Mammary epithelial cell (primary cell): ENCODE measurements at regions of chr17 and their contacts with region 1.

Region 1: DNA sequence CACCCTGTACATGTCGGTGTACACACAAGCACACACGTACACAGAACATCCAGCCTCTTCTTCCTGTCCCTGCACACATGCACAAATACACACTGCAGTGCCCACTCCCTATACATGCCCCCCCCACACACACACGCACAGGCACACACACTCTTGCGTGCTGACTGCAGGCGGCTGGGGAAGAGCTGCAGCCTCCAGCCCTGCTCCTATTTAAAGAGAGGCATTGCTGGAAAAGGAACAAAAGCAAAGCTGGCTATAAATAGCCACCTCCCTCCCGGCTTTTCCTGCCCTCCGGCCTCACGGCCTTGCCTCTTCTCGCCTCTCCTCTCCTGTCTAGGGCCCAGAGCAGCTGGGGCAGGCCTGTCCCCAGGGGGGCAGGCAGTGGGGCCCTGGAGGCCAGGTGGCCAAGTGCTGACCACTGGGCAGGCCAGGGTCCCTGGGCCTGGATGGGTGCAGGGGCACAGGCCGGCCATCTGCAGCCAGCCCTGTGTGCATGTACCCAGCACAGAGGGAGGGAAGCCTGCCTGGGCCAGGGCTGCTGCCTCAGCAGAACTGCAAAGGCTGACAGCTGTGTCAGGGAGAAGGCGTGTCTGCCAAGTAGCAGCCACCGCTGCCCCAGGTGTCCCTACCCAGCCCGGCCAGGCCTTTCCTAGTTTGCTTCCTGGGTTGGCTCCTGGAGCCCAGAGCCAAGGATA is 25.4 kb downstream of the RTN4RL1 start:
- DNase-seq: no peak
- H3K4me3 ChIP-seq: no peak overlapping the region
- H3K27ac ChIP-seq: no peak overlapping the region
- H3K4me1 ChIP-seq: peaks cover 11% of the 10 kb centered on the region
- H3K27me3 ChIP-seq: no peaks in the 10 kb centered on the region
- CTCF ChIP-seq: no peak

Region 2: DNA sequence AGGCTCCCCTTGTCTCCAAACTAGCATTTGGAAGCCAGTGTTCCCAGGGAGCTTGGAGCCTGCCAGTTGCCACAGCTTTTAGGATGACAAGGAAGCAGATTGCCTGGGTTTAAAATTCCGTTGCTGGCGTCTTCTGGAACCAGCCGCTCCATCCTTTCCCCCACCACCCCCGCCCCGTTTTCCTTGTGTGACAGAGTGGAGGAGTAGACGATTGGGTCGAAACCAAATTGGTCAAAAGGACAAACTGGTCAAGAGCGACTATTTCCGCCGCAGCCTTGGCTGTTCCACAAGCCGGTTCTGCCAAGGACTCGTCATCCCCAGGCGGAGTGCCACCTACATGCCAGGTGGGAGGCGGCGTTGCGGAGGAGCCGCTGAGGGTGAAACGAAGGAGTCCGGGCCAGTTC is 78.8 kb before region 1 on chr17:
- CTCF ChIA-PET with region 1: no interaction called
- dilution Hi-C with region 1: loop called (anchors 5 kb)
- in situ Hi-C with region 1: no loop called
- intact Hi-C with region 1: no loop called
- DNase-seq: peak; percentile 15
- H3K4me3 ChIP-seq: no peak overlapping the region
- H3K27ac ChIP-seq: no peak overlapping the region
- H3K4me1 ChIP-seq: no peaks in the 10 kb centered on the region
- H3K27me3 ChIP-seq: no peaks in the 10 kb centered on the region
- CTCF ChIP-seq: no peak

Region 3: DNA sequence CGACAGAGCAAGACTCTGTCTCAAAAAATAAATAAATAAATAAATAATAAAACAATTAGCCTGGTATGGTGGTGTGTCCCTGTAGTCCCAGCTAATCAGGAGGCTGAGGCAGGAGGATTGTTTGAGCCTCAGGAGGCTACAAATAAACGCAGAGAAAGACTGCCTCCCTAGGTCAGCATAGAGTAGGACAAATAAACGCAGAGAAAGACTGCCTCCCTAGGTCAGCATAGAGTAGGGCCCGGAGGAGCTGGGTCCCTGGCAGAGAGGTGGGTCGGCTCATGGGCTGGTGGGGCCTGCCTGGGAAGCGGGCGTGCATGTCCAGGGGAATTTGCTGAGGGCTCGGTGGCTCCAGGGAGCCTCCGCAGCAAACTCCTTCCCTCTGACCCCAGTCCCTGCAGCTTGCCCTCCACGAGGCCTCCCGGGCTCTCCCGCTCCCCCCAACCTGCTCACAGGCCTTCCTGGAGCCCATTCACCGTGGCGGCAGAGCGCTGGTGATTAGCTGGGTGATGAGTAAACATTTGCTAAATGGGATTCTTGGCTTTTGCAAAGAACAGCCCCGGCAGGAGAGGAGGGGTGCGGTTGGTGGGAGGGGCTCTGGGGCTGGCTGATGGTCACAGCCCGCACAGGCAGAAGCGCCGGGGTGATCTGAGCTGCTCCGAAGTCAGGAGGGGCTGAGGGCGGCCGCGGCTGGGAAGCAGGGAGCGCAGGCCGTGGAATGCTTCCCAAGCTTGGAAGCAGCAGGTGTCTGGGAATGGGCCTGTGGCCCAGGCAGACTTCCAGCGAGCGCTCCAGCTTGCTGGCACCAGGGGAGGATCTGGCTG is 67.7 kb before region 1 on chr17:
- CTCF ChIA-PET with region 1: no interaction called
- dilution Hi-C with region 1: no loop called
- in situ Hi-C with region 1: no loop called
- intact Hi-C with region 1: no loop called
- DNase-seq: peak; percentile 8
- H3K4me3 ChIP-seq: no peak overlapping the region
- H3K27ac ChIP-seq: no peak overlapping the region
- H3K4me1 ChIP-seq: no peaks in the 10 kb centered on the region
- H3K27me3 ChIP-seq: peaks cover 3% of the 10 kb centered on the region
- CTCF ChIP-seq: no peak

Region 4: GRCh38 chr17:1959871-1960544 is 39.7 kb before region 1 on chr17:
- CTCF ChIA-PET with region 1: no interaction called
- dilution Hi-C with region 1: loop called (anchors 5 kb)
- in situ Hi-C with region 1: no loop called
- intact Hi-C with region 1: no loop called
- DNase-seq: no peak
- H3K4me3 ChIP-seq: no peak overlapping the region
- H3K27ac ChIP-seq: no peak overlapping the region
- H3K4me1 ChIP-seq: no peaks in the 10 kb centered on the region
- H3K27me3 ChIP-seq: no peaks in the 10 kb centered on the region
- CTCF ChIP-seq: no peak

Region 5: GRCh38 chr17:1972487-1973160 is 27.1 kb before region 1 on chr17:
- CTCF ChIA-PET with region 1: no interaction called
- dilution Hi-C with region 1: no loop called
- in situ Hi-C with region 1: no loop called
- intact Hi-C with region 1: no loop called
- DNase-seq: no peak
- H3K4me3 ChIP-seq: no peak overlapping the region
- H3K27ac ChIP-seq: no peak overlapping the region
- H3K4me1 ChIP-seq: no peaks in the 10 kb centered on the region
- H3K27me3 ChIP-seq: peaks cover under 1% of the 10 kb centered on the region
- CTCF ChIP-seq: no peak

Region 6: GRCh38 chr17:2054512-2055291 is 55.0 kb after region 1 on chr17 and contains the start of gene HIC1:
- CTCF ChIA-PET with region 1: no interaction called
- dilution Hi-C with region 1: no loop called
- in situ Hi-C with region 1: no loop called
- intact Hi-C with region 1: no loop called
- DNase-seq: peak; percentile 57
- H3K4me3 ChIP-seq: peak within 1 kb of the TSS; percentile 43 to 55 (median 45)
- H3K27ac ChIP-seq: no peak within 1 kb of the TSS
- H3K4me1 ChIP-seq: peaks cover 15% of the 10 kb centered on the region
- H3K27me3 ChIP-seq: no peaks in the 10 kb centered on the region
- CTCF ChIP-seq: peak; percentile 68 to 71
- total RNA-seq, gene HIC1: 0.67 to 1.3 TPM